Heart right ventricle (tissue), 16 donors: ENCODE measurements at regions of chr5 and their contacts with region 1.

Region 1: DNA sequence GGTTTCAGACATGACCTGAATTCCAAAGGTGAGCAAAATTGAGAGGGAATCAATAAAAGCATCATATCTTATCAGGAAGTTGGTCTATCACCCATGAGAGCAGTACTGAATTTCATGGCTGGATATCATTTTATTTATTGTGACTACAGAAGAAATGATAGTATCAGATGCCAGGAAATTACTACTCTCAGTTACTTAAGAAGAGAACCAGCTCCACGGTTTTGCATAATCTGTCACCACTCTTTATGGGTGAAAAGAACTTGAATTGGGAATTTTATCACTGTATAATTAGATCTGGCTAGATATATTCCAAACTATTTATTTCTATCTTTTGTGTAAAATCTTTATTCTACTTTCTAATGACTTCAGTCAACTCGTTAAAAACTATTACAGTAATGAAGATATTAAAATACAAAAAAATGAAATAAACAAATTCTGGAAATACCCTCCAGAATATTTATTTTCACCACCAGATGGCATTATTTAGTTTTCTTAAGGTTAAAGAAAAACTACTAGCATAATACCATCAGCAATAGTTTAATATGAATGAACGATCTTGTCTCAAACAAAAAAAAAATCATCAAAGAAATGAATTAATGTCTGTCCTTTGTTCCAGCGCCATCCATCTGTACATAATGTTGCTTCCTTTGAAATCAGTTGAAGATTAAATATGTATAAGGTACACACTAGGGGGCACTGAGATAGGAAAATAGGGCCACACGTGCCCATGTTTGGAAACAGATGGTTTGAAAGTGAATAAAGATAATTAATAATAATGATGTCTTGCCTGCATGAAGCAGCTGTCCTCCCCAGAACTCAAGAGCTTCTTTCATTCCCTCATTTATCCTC is 84.7 kb upstream of the SLCO6A1 start:
- DNase-seq: no peak
- ATAC-seq: no peak
- H3K4me3 ChIP-seq: no peak overlapping the region
- H3K27ac ChIP-seq: no peak overlapping the region
- H3K4me1 ChIP-seq: peaks cover 0 to 3% (median 0%) of the 10 kb centered on the region in 9 donors
- H3K27me3 ChIP-seq: no peaks in the 10 kb centered on the region
- CTCF ChIP-seq: peak in 8 of 9 donors; percentile 25 to 66 (median 56)

Region 2: GRCh38 chr5:102628441-102629175 is 45.1 kb after region 1 on chr5:
- intact Hi-C with region 1: no loop called
- DNase-seq: peak in 1 of 2 donors; percentile 28
- ATAC-seq: peak; percentile 44 to 92 (median 80)
- H3K4me3 ChIP-seq: no peak overlapping the region
- H3K27ac ChIP-seq: peak overlapping the region in 7 of 10 donors; percentile 34 to 71 (median 62)
- H3K4me1 ChIP-seq: peaks cover 0 to 24% (median 7%) of the 10 kb centered on the region in 9 donors
- H3K27me3 ChIP-seq: no peaks in the 10 kb centered on the region
- CTCF ChIP-seq: no peak

Region 3: DNA sequence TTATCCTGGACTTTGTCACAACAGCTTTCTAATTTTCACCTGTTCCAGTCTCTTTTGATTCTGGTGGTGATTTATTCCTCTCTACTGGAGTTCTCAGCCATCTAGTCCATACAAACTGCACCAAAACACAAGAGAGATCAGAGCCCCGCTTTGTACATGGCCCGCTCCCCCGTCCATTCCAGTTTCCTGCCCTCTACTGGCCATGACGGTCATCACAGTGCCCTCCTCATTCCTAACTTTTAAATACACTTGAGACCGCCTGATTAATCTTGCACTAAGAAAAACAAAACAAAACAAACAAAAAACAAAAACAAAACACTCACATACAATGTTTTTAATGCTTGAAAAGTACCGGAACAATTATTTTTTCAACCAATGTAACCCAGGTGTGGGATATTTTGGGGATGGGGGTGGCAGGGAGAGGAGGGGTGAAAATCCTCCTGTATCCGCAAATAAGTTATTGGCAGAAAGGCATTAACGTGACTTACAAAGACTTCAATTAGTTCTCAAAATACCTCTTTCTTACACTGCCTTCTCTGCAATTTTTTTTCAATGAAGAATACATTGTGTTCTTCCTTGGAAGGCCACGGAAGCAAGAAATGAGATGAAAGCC is 86.8 kb after region 1 on chr5:
- intact Hi-C with region 1: loop called (anchors 1 to 10 kb)
- DNase-seq: peak; percentile 6 to 12
- ATAC-seq: peak in 4 of 8 donors; percentile 53 to 75 (median 61)
- H3K4me3 ChIP-seq: no peak overlapping the region
- H3K27ac ChIP-seq: no peak overlapping the region
- H3K4me1 ChIP-seq: peaks cover 0 to 1% (median 0%) of the 10 kb centered on the region in 9 donors
- H3K27me3 ChIP-seq: no peaks in the 10 kb centered on the region
- CTCF ChIP-seq: peak; percentile 20 to 63 (median 57)

Region 4: DNA sequence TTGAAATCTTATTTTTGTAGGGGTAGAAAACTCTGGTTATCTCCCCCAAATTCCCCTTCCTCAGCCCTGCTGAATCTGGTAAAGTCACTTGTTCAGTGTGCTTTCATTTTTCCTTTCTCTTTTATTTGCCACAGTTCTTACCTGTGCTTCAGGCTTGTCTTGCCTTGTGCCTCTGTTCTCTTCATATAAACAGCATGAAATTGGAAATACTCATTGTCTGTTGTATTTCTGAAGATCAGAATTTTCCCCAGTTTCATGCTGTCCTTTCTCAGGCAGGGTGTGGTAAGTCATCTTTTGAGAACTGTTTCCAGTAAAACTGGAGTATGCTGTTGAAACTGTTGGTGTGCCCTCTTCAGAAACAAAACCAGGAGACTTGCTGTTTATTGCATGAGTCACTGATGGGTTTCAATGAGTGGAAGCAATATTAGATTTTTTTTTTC is 178.6 kb after region 1 on chr5:
- intact Hi-C with region 1: loop called in 1 of 10 experiments (anchors 10 kb)
- DNase-seq: no peak
- ATAC-seq: peak in 3 of 8 donors; percentile 28 to 38 (median 33)
- H3K4me3 ChIP-seq: peak overlapping the region in 3 of 10 donors; percentile 5 to 20 (median 11)
- H3K27ac ChIP-seq: peak overlapping the region in 8 of 10 donors; percentile 19 to 68 (median 42)
- H3K4me1 ChIP-seq: peaks cover 0 to 72% (median 63%) of the 10 kb centered on the region in 9 donors
- H3K27me3 ChIP-seq: no peaks in the 10 kb centered on the region
- CTCF ChIP-seq: no peak

Region 5: DNA sequence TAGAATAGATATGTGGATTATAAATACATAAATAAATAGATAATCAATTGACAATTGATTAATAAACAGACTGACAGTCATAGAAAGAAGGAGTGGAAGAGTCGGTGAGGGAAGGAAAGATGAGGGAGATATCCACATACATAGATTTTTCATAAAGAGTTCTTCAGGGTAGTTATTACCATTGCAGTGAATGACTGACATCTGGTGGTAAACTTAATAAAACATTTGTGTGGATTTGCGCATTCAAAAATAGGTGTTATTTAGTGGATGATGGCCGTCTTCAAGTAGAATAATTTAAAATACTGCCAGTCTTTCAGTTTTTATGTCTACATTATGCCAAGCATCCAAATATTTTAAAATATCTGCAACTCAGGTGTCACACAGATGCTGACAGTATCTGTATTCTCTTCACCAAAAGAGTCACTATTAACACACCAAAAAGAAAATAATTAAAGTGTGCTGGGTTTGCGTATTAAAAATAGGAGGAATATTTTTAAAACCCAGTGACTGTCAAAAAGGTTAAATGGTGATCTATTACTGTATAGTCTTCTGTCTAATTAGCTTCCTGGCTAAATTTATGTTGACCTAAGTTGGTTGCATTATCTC is 457.7 kb after region 1 on chr5:
- intact Hi-C with region 1: loop called in 9 of 10 experiments (anchors 2 to 10 kb)
- DNase-seq: no peak
- ATAC-seq: no peak
- H3K4me3 ChIP-seq: no peak overlapping the region
- H3K27ac ChIP-seq: no peak overlapping the region
- H3K4me1 ChIP-seq: no peaks in the 10 kb centered on the region
- H3K27me3 ChIP-seq: no peaks in the 10 kb centered on the region
- CTCF ChIP-seq: peak; percentile 44 to 82 (median 63)

Region 6: GRCh38 chr5:103139264-103139865 is 555.9 kb after region 1 on chr5:
- intact Hi-C with region 1: loop called in 7 of 10 experiments (anchors 5 to 10 kb)
- DNase-seq: peak; percentile 49 to 76
- ATAC-seq: peak; percentile 71 to 91 (median 84)
- H3K4me3 ChIP-seq: no peak overlapping the region
- H3K27ac ChIP-seq: no peak overlapping the region
- H3K4me1 ChIP-seq: no peaks in the 10 kb centered on the region
- H3K27me3 ChIP-seq: no peaks in the 10 kb centered on the region
- CTCF ChIP-seq: peak; percentile 74 to 94 (median 91)